A673 (cell line): ENCODE measurements at regions of chr5 and their contacts with region 1.

Region 1: GRCh38 chr5:163564321-163564938 is 59.0 kb downstream of the MAT2B start:
- DNase-seq: peak; percentile 63
- H3K4me3 ChIP-seq: no peak overlapping the region
- H3K27ac ChIP-seq: no peak overlapping the region
- H3K4me1 ChIP-seq: peaks cover 17% of the 10 kb centered on the region
- H3K27me3 ChIP-seq: peaks cover 43% of the 10 kb centered on the region
- CTCF ChIP-seq: peak; percentile 81

Region 2: DNA sequence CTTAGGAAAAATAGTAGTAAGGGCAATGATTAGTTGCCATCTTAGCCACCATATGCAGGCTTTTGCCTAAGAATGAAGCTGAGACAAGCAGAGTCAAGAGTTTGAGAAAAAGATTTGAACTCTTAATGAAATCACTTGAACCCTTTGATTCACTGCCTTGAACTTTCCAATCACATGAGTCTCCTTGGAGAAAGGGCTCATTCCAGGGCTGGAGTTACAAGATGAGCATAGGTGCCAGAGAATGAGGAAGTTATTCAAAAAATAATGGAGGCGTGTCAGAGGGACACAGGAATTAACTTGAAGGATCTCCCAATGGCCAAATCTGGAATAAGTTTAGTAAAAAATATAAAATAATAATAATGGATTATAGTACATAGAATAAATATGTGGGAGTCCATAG is 23.7 kb before region 1 on chr5:
- CTCF ChIA-PET with region 1: no interaction called
- POLR2A ChIA-PET with region 1: no interaction called
- intact Hi-C with region 1: no loop called
- DNase-seq: no peak
- H3K4me3 ChIP-seq: no peak overlapping the region
- H3K27ac ChIP-seq: no peak overlapping the region
- H3K4me1 ChIP-seq: no peaks in the 10 kb centered on the region
- H3K27me3 ChIP-seq: peaks cover 14% of the 10 kb centered on the region
- CTCF ChIP-seq: no peak

Region 3: GRCh38 chr5:163695830-163696578 is 131.6 kb after region 1 on chr5:
- CTCF ChIA-PET with region 1: no interaction called
- POLR2A ChIA-PET with region 1: no interaction called
- intact Hi-C with region 1: loop called (anchors 5 kb)
- DNase-seq: peak; percentile 40
- H3K4me3 ChIP-seq: no peak overlapping the region
- H3K27ac ChIP-seq: no peak overlapping the region
- H3K4me1 ChIP-seq: no peaks in the 10 kb centered on the region
- H3K27me3 ChIP-seq: peaks cover 58% of the 10 kb centered on the region
- CTCF ChIP-seq: peak; percentile 62

Region 4: GRCh38 chr5:164013077-164013670 is 448.7 kb after region 1 on chr5:
- CTCF ChIA-PET with region 1: no interaction called
- POLR2A ChIA-PET with region 1: no interaction called
- intact Hi-C with region 1: loop called (anchors 5 kb)
- DNase-seq: peak; percentile 71
- H3K4me3 ChIP-seq: no peak overlapping the region
- H3K27ac ChIP-seq: no peak overlapping the region
- H3K4me1 ChIP-seq: no peaks in the 10 kb centered on the region
- H3K27me3 ChIP-seq: peaks cover 15% of the 10 kb centered on the region
- CTCF ChIP-seq: peak; percentile 63

Region 5: DNA sequence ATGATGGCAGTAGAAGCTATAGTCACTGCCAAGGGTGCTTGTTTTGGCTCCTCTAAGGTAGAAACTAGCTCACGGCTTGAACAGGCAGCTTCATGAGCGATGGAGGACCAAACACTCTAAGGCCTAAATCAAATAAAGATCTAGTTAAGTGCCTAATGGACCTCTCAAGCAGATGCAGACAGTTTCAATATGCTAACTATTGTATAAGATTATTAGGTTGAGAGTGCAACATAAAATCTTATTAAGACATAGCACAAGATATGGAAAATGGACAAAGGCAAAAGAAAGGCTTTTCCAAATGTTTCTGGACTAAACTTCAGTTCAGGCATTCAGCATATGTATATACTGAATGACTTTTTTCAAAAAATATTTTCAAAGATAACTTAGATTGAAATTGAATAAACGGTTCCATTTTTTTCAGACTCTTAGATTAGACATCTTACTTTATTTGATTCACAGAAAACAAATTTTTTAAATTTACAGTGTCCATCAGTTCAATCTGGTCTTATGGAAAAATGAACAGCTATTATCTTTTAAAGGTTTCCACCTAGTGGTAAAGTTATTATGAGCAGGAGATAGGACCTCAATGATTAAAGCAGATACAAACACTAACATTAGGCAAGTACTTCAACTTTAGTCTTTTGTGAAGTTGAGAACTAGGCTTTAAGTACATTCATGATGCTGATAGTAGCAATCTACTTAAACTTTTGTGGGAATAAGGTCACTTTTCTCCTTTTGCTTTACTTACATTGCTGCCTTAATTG is 1108.7 kb after region 1 on chr5:
- CTCF ChIA-PET with region 1: no interaction called
- POLR2A ChIA-PET with region 1: no interaction called
- intact Hi-C with region 1: loop called (anchors 5 kb)
- DNase-seq: peak; percentile 4
- H3K4me3 ChIP-seq: no peak overlapping the region
- H3K27ac ChIP-seq: no peak overlapping the region
- H3K4me1 ChIP-seq: no peaks in the 10 kb centered on the region
- H3K27me3 ChIP-seq: no peaks in the 10 kb centered on the region
- CTCF ChIP-seq: 0 out of 2 replicates have a peak, but pooled peaks have one; percentile 18

Region 6: DNA sequence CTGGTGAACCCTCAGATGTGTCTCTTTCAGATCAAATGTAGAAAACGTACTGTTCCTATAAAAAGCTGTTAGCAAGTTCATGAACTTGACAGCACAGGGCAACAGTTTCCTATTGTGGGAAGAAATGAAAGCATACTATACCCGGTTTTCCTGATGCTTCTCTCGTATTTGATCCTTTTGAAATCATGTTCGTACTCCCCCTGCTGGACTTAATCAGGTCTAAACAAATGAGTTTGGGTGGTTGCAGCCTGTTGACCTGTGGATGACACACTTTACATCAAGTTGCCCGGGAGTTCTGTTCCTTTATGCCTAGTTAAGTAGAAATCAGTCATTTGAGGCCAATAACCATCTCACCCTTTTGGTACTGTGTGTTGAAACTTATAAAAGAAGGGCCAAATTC is 1933.3 kb after region 1 on chr5:
- CTCF ChIA-PET with region 1: no interaction called
- POLR2A ChIA-PET with region 1: no interaction called
- intact Hi-C with region 1: loop called (anchors 5 kb)
- DNase-seq: peak; percentile 45
- H3K4me3 ChIP-seq: no peak overlapping the region
- H3K27ac ChIP-seq: no peak overlapping the region
- H3K4me1 ChIP-seq: no peaks in the 10 kb centered on the region
- H3K27me3 ChIP-seq: peaks cover 12% of the 10 kb centered on the region
- CTCF ChIP-seq: peak; percentile 52